ENCODE measurements at regions of chr14 and their contacts with region 1.

Region 1: GRCh38 chr14:35121887-35122695 is at the starts of genes PPP2R3C and PRORP:
- DNase-seq: peak; percentile 80 to 96 (median 93)
- ATAC-seq: peak; percentile 90
- H3K4me3 ChIP-seq: peak within 1 kb of the TSS; percentile 86
- H3K4me3 Mint-ChIP-seq: peak within 1 kb of the TSS; percentile 89 to 100 (median 99)
- H3K27ac ChIP-seq: peak within 1 kb of the TSS; percentile 97
- H3K27ac Mint-ChIP-seq: peak within 1 kb of the TSS; percentile 99 to 100 (median 100)
- H3K4me1 ChIP-seq: peaks cover 16 to 22% of the 10 kb centered on the region in 2 donors
- H3K4me1 Mint-ChIP-seq: peaks cover 39 to 85% (median 73%) of the 10 kb centered on the region in 7 donors
- H3K27me3 ChIP-seq: no peaks in the 10 kb centered on the region
- H3K27me3 Mint-ChIP-seq: peaks cover 0 to 3% (median 0%) of the 10 kb centered on the region in 5 donors
- total RNA-seq, gene PPP2R3C: 31.4 to 43.3 (median 33.5) TPM
- total RNA-seq, gene PRORP: 31.2 to 40.9 (median 38.4) TPM

Region 2: DNA sequence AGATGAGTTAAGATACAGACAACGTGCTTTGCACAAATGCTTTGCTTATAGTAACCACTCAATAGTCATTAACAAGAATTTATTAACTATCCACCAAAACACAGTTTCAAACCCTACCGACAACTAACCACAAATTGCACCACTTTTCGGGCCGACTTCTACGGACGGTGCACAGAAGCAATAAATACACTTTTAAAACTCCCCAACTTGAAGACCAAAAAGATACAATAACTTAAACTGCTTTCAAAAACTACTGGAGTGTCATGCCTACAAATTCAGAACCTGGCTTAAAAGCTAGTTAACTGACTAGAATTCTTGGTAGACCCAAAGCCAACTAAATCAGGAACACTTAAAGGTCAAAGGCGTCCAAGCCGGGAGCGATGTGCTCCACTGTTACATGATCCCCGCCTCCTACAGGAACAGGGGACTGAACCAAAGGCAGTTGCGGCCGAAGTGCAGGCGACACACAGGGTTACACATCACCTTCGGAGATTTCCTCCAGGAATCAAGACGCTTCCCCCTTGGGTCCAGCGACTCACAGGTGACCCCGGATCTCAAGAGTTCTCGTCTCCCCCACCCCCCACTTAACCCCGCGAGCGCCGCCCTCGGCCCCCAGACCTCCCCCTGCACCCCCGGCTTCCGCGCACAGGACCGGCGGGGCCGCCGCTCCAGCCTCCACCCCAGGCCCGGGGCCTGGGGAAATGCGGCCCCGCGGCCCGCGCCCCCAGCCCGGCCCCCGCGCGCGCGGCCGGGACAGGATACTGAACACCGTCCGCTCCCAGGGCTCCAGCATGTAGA is 660.6 kb before region 1 on chr14:
- CTCF ChIA-PET with region 1: no interaction called
- POLR2A ChIA-PET with region 1: no interaction called
- intact Hi-C with region 1: loop called in 1 of 2 experiments (anchors 5 kb)
- DNase-seq: peak in 7 of 9 donors; percentile 2 to 22 (median 16)
- ATAC-seq: peak; percentile 4
- H3K4me3 ChIP-seq: peak overlapping the region; percentile 70
- H3K4me3 Mint-ChIP-seq: peak overlapping the region; percentile 83 to 97 (median 89)
- H3K27ac ChIP-seq: peak overlapping the region; percentile 78
- H3K27ac Mint-ChIP-seq: peak overlapping the region; percentile 60 to 94 (median 86)
- H3K4me1 ChIP-seq: peaks cover 0 to 6% of the 10 kb centered on the region in 2 donors
- H3K4me1 Mint-ChIP-seq: peaks cover 11 to 25% (median 15%) of the 10 kb centered on the region in 7 donors
- H3K27me3 ChIP-seq: no peaks in the 10 kb centered on the region
- H3K27me3 Mint-ChIP-seq: no peaks in the 10 kb centered on the region

Region 3: GRCh38 chr14:34875031-34875922 is 246.8 kb before region 1 on chr14 and contains the start of gene BAZ1A:
- CTCF ChIA-PET with region 1: no interaction called
- POLR2A ChIA-PET with region 1: interaction called, 4 read pairs
- intact Hi-C with region 1: loop called (anchors 1 kb)
- DNase-seq: peak; percentile 26 to 61 (median 55)
- ATAC-seq: peak; percentile 14
- H3K4me3 ChIP-seq: peak within 1 kb of the TSS; percentile 85
- H3K4me3 Mint-ChIP-seq: peak within 1 kb of the TSS; percentile 91 to 100 (median 99)
- H3K27ac ChIP-seq: peak within 1 kb of the TSS; percentile 96
- H3K27ac Mint-ChIP-seq: peak within 1 kb of the TSS; percentile 94 to 100 (median 99)
- H3K4me1 ChIP-seq: peaks cover 10 to 19% of the 10 kb centered on the region in 2 donors
- H3K4me1 Mint-ChIP-seq: peaks cover 18 to 40% (median 34%) of the 10 kb centered on the region in 7 donors
- H3K27me3 ChIP-seq: no peaks in the 10 kb centered on the region
- H3K27me3 Mint-ChIP-seq: no peaks in the 10 kb centered on the region
- total RNA-seq, gene BAZ1A: 47.4 to 62.5 (median 53.3) TPM

Region 4: GRCh38 chr14:35140718-35141581 is 18.9 kb after region 1 on chr14:
- CTCF ChIA-PET with region 1: no interaction called
- POLR2A ChIA-PET with region 1: interaction called, 4 read pairs
- intact Hi-C with region 1: loop called in 1 of 2 experiments (anchors 1 kb)
- DNase-seq: peak in 4 of 9 donors; percentile 24 to 57 (median 40)
- ATAC-seq: peak; percentile 69
- H3K4me3 ChIP-seq: no peak overlapping the region
- H3K4me3 Mint-ChIP-seq: no peak overlapping the region
- H3K27ac ChIP-seq: peak overlapping the region; percentile 40
- H3K27ac Mint-ChIP-seq: peak overlapping the region in 6 of 9 donors; percentile 65 to 91 (median 75)
- H3K4me1 ChIP-seq: no peaks in the 10 kb centered on the region
- H3K4me1 Mint-ChIP-seq: peaks cover 2 to 26% (median 17%) of the 10 kb centered on the region in 7 donors
- H3K27me3 ChIP-seq: no peaks in the 10 kb centered on the region
- H3K27me3 Mint-ChIP-seq: no peaks in the 10 kb centered on the region

Region 5: GRCh38 chr14:35292051-35292769 is 170.1 kb after region 1 on chr14 and contains the start of gene PSMA6:
- CTCF ChIA-PET with region 1: no interaction called
- POLR2A ChIA-PET with region 1: interaction called, 9 read pairs
- intact Hi-C with region 1: loop called (anchors 1 kb)
- DNase-seq: peak; percentile 96 to 99 (median 99)
- ATAC-seq: peak; percentile 99
- H3K4me3 ChIP-seq: peak within 1 kb of the TSS; percentile 89
- H3K4me3 Mint-ChIP-seq: peak within 1 kb of the TSS; percentile 92 to 99 (median 97)
- H3K27ac ChIP-seq: peak within 1 kb of the TSS; percentile 90
- H3K27ac Mint-ChIP-seq: peak within 1 kb of the TSS; percentile 94 to 99 (median 96)
- H3K4me1 ChIP-seq: peaks cover 16 to 22% of the 10 kb centered on the region in 2 donors
- H3K4me1 Mint-ChIP-seq: peaks cover 17 to 54% (median 51%) of the 10 kb centered on the region in 7 donors
- H3K27me3 ChIP-seq: no peaks in the 10 kb centered on the region
- H3K27me3 Mint-ChIP-seq: no peaks in the 10 kb centered on the region
- total RNA-seq, gene PSMA6: 76.6 to 274 (median 90.0) TPM

Region 6: DNA sequence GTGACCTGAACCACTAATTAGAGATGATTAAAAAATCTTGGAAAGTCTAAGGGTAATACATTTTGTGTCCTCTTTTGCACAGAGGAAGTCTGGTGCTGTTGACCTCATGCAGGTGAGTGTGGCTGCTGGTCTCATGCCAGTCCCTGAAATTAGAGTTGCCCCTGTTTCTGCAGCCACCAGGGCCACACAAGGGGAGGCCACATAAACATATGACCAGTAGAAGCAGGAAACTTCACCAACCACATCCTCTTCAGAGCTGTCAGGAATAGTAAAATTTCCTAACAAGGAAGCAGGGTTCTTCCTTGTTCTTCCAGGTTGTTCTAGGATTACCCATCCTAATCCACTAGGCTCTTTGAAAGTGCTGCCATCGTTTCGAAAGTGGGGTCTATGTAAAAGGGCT is 198.4 kb after region 1 on chr14:
- CTCF ChIA-PET with region 1: no interaction called
- POLR2A ChIA-PET with region 1: no interaction called
- intact Hi-C with region 1: no loop called
- DNase-seq: no peak
- ATAC-seq: no peak
- H3K4me3 ChIP-seq: no peak overlapping the region
- H3K4me3 Mint-ChIP-seq: no peak overlapping the region
- H3K27ac ChIP-seq: no peak overlapping the region
- H3K27ac Mint-ChIP-seq: peak overlapping the region in 1 of 9 donors; percentile 42
- H3K4me1 ChIP-seq: no peaks in the 10 kb centered on the region
- H3K4me1 Mint-ChIP-seq: peaks cover 0 to 14% (median 0%) of the 10 kb centered on the region in 7 donors
- H3K27me3 ChIP-seq: no peaks in the 10 kb centered on the region
- H3K27me3 Mint-ChIP-seq: no peaks in the 10 kb centered on the region

Region 7: DNA sequence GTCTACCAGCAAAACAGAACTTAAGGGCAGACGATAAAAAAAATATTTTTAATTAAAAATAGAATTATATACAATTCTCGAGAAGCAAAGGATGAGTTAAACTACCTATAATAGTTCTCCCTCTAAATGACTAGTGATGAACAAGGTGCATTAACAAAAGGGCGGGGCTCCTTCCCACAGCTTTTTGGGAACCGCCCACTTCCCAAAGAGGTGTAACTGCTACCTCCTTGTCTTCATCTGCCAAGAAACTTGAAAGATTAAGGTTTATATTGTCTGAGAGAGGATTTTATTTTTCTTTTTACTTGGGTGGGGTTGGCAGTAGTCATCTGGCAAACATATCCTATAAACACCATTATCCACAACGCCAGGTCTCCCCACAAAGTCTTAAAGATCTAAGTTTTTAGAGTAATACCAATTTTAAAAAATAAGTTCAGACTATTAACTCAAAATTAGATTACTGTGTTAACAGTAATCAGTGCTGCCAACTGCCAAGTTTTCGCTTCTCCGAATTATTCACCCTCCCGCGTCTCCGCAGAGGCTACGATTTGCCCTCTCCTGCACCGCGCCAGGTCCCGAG is 686.1 kb after region 1 on chr14:
- CTCF ChIA-PET with region 1: no interaction called
- POLR2A ChIA-PET with region 1: no interaction called
- intact Hi-C with region 1: loop called in 1 of 2 experiments (anchors 1 kb)
- DNase-seq: peak in 1 of 9 donors; percentile 28
- ATAC-seq: no peak
- H3K4me3 ChIP-seq: peak overlapping the region; percentile 80
- H3K4me3 Mint-ChIP-seq: peak overlapping the region; percentile 85 to 99 (median 98)
- H3K27ac ChIP-seq: peak overlapping the region; percentile 77
- H3K27ac Mint-ChIP-seq: peak overlapping the region; percentile 80 to 97 (median 96)
- H3K4me1 ChIP-seq: peaks cover 14 to 16% of the 10 kb centered on the region in 2 donors
- H3K4me1 Mint-ChIP-seq: peaks cover 18 to 55% (median 34%) of the 10 kb centered on the region in 7 donors
- H3K27me3 ChIP-seq: no peaks in the 10 kb centered on the region
- H3K27me3 Mint-ChIP-seq: peaks cover 0 to 6% (median 0%) of the 10 kb centered on the region in 5 donors